Upper lobe of right lung (tissue), 1 donor: ENCODE measurements at regions of chr18 and their contacts with region 1.

Region 1: DNA sequence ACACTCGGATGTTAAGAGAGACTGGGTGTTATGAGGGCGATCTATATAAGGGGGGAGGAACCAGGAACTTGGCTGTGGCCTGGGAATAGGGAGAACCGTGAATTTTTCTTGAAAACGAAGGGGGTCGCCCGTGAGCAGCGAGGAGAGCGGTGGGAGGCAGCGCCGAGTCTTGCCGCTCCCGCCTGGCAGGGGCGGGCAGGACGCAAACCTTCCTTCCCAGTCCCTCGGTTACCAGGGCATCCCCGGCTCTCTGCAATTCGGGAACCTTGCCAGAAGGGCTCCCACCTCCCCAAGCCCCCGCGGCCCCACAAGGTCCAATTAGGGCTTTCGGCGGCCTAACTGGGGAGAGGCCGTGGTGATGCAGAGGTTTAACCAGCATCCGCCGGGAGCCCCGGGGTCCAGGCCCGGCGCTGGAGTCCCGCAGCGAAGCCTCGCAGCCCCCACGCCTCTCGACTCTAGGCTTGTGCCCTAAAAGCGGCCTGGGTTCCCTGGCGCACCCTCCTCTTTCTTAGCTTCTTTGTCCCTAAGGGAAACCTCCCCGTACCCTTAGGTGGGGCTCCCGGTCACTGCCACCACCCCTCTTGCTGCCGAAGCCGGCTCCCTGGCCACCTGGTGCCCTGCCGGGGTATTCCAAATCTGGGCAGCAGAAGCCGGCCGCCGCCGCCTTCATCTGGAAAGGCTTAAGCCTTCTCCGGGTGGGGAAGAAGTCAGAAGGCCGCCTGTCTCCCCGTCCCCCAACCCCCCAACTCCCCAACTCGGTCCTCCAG is 680 bp upstream of the FHOD3 start:
- DNase-seq: peak; percentile 70
- ATAC-seq: peak; percentile 45
- H3K4me3 ChIP-seq: peak overlapping the region; percentile 54
- H3K27ac ChIP-seq: no peak overlapping the region
- H3K4me1 ChIP-seq: peaks cover 17% of the 10 kb centered on the region
- H3K27me3 ChIP-seq: peaks cover 52% of the 10 kb centered on the region
- CTCF ChIP-seq: peak; percentile 35

Region 2: DNA sequence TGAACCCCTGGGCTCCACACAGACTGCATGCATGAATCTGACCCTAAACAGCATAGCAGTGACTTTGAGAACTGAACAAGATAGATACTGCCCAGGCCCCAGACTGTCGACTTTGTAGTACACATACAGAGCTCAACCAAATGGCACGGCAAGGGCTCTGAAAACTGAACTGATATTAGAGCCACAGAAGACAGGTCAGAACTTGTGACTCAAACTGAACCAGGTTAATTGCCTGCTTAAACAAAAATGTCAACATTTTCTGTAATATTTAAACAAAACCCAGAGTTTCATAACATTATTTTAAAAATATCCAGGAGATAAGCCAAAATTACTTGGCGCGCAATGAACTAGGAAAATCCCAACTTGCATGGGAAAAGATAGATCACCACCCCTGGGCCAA is 271.7 kb after region 1 on chr18:
- intact Hi-C with region 1: loop called (anchors 10 kb)
- DNase-seq: no peak
- ATAC-seq: no peak
- H3K4me3 ChIP-seq: no peak overlapping the region
- H3K27ac ChIP-seq: no peak overlapping the region
- H3K4me1 ChIP-seq: no peaks in the 10 kb centered on the region
- H3K27me3 ChIP-seq: no peaks in the 10 kb centered on the region
- CTCF ChIP-seq: no peak